Right ventricle myocardium superior (tissue), 1 donor: ENCODE measurements at regions of chr20 and their contacts with region 1.

Region 1: DNA sequence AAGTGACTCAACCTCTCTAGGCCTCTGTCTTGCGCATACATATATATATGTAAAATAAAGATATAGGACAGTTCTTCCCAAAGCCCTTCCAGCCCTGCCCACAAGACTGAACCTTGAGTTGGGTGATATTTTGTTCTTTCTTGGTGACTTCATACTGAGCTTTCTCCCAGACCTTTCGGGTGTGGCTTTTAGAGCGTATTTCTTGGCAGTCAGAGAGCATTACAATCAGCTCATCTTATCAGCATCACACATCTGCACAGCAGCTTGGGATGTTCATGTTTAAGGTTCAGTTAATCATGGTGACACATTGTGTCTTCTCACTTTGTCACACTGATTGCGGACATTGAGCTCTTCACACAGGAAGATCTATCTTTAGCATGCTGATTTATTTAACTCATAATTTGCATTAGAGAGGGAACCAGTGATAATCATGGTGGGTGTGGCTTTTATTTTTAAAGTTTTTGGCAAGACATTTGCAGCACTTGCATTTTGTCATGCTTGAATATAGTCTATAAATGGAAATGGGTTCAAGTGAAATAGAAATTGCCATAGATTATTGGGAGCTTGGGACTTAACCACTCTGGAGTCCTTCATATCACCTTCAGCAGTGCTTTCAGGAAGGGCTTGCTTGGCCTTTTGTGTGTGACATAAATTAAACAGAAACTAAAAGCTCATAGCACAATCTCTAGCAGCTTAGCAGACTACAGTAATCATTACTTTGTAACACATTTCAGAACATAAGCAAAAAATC is 8.3 kb downstream of the KIF3B start:
- DNase-seq: no peak
- ATAC-seq: peak; percentile 60

Region 2: GRCh38 chr20:32207626-32208498 is 77.9 kb before region 1 on chr20 and contains the starts of genes PLAGL2 and POFUT1:
- intact Hi-C with region 1: loop called (anchors 10 kb)
- DNase-seq: peak; percentile 94
- ATAC-seq: peak; percentile 95
- total RNA-seq, gene PLAGL2: 5.7 TPM
- total RNA-seq, gene POFUT1: 24.9 TPM